PC-9 (cell line): ENCODE measurements at regions of chrX and their contacts with region 1.

Region 1: DNA sequence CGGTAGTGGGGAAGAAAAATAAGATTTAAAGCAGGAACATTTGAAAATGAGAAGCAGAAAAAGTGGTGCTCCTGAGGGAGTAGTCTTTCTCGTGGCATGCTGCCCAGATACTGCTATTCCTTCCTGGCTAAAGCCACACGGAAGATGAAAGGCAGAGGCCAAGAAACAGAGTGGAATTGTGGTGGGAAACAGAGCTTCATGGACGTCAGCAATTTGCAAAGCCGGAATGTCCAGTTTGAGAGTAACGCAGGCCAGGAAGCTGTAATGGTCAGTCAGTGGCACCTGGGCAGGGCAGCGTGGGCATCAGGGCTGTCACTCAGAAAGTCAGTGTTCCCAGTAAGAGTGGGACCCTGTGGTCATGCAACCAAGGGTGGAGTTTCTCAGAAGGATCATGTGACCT is 63.7 kb upstream of the FMR1 start:
- DNase-seq: peak; percentile 66 to 68
- H3K4me3 ChIP-seq: no peak overlapping the region
- H3K27ac ChIP-seq: no peak overlapping the region
- H3K4me1 ChIP-seq: 0 out of 2 replicates have a peak, but pooled peaks cover 5% of the 10 kb centered on the region
- H3K27me3 ChIP-seq: no peaks in the 10 kb centered on the region
- CTCF ChIP-seq: no peak

Region 2: GRCh38 chrX:147875866-147876596 is 28.0 kb after region 1 on chrX:
- CTCF ChIA-PET with region 1: no interaction called
- POLR2A ChIA-PET with region 1: no interaction called
- intact Hi-C with region 1: no loop called
- DNase-seq: peak; percentile 26 to 74
- H3K4me3 ChIP-seq: no peak overlapping the region
- H3K27ac ChIP-seq: no peak overlapping the region
- H3K4me1 ChIP-seq: peaks cover 11% of the 10 kb centered on the region; the same call in 1 of the 2 replicates
- H3K27me3 ChIP-seq: no peaks in the 10 kb centered on the region
- CTCF ChIP-seq: no peak

Region 3: DNA sequence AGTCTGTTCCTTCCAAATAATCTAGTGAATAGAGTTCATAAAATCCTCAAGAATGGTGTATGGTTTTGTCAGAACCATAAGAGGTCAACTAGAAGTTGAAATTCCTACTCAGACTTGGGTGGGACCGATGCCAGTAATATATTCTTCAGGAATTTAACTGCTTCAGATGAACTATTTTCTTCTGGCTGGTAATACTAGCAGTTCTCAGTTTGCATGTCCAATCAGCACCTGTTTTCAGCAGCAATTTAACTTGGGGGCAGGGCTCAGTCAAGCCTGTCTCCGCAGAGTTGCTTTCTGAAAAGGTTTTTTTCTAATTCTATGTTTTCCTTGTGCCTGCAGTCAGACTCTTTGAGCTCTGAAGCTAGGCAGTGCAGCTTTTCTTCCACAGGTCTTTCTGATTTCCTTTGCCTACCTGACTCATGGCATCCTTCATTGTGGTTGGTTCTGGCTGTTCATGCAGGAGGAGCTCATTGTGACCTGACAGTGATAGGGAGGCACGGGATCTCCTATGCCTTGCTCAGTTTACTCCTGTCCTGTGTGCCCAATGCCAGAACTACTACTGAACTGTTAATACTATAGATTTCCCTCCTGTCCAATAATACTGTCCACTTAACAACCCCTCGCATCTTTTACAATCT is 46.4 kb after region 1 on chrX:
- CTCF ChIA-PET with region 1: no interaction called
- POLR2A ChIA-PET with region 1: no interaction called
- intact Hi-C with region 1: loop called (anchors 1 kb)
- DNase-seq: peak in 1 of 2 experiments; percentile 47
- H3K4me3 ChIP-seq: no peak overlapping the region
- H3K27ac ChIP-seq: no peak overlapping the region
- H3K4me1 ChIP-seq: no peaks in the 10 kb centered on the region; the same call in 1 of the 2 replicates
- H3K27me3 ChIP-seq: no peaks in the 10 kb centered on the region
- CTCF ChIP-seq: no peak